ENCODE measurements at regions of chr5 and their contacts with region 1.

Region 1: DNA sequence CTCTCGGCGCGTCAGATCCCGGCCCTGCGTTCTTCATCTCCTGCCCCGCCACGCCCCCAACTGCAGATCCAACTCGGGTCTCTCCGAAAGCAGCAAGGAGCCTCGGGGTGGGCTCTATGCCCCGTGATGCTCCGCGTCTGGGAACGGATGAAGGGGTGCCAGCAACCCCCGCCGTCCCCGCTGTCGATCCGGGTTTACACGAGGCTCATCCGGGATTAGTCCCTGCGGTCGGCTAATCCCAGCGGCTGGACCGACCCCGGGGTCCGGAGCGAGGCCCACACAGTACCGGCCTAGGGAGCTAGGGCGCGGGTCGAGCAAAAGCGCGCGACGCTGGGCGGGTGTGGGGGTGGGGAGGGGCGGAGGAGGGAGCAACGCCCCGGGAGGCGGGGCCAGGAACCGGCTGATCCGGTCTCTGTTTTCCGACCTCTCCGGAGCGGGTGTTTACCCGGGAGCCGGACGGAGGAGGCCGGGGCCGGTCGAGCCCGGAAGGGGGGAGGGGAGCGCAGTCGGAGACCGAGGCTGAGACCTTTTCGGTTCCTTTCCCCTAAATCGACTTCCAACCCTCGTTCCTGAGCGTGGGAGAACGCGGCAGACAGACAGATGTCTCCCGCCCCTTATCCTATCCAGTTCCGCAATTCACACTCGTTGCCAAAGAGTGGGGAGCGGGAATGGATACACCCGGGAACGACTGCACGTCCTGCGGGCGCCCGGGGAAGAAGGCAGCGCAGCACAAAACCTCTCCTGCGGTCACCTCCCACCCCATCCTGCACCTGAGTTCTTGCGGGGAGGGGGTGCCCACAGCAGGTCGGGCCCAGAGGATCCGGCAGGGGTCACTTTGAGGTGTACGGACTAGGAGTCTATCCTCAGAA is 28.6 kb downstream of the PCDH1 start:
- DNase-seq: peak; percentile 92
- H3K4me3 Mint-ChIP-seq: peak overlapping the region; percentile 87
- H3K27ac Mint-ChIP-seq: peak overlapping the region; percentile 85
- H3K4me1 Mint-ChIP-seq: peaks cover 23% of the 10 kb centered on the region
- H3K27me3 Mint-ChIP-seq: no peaks in the 10 kb centered on the region

Region 2: DNA sequence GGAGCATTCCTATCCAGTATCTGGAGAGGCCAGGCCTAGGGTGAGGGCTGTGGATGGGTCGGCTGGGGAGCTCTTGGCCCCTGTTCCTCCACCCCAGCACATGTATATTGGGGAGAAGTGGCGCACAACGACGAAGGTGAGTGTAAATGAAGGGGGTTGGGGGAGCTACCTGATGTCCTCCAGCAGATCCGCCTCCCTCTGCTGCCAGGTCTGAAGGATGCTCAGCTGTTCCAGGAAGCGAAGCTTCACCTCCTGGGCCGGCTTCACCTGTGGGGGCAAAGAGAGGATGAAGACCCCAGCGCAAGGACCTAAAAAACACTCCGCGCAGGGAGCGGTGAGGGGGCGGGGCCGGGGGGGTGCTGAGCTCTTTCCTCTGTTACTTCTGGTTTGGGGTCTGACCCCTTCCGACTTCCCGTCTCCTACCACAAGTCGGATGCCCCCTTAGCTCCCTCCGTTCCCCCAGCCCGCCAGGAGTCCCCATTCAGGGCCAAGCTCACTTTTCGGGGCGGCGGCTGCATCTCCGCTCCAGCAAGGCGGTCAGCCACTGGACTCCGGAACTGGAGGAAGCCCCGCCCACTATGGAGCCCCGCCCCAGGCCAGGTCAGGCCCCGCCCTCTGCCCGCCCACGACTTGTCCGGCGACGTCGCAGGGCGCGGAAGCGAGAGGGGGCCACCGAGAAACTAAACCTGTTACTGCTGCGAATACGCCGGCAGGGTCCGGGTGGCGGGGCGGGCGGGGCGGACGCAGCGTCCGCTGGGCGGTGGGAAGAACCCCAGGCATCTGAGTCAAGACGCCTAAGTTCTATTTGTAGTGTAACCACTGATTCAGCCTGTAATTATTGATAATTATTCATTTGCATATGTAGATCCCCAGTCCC is 198.5 kb before region 1 on chr5 and contains the start of gene FCHSD1:
- intact Hi-C with region 1: loop called (anchors 5 kb)
- DNase-seq: peak; percentile 94
- H3K4me3 Mint-ChIP-seq: peak within 1 kb of the TSS; percentile 92
- H3K27ac Mint-ChIP-seq: peak within 1 kb of the TSS; percentile 93
- H3K4me1 Mint-ChIP-seq: peaks cover 28% of the 10 kb centered on the region
- H3K27me3 Mint-ChIP-seq: no peaks in the 10 kb centered on the region
- total RNA-seq, gene FCHSD1: 33.1 and 34.5 TPM in 2 replicates

Measured in activated CD4-positive, alpha-beta T cell treated with anti-CD3 and anti-CD28 coated beads, Interleukin-2, amount 10 ng/mL, durations not matched to agents 24 days and 14 days (primary cell).